ENCODE measurements at regions of chr21 and their contacts with region 1.

Region 1: DNA sequence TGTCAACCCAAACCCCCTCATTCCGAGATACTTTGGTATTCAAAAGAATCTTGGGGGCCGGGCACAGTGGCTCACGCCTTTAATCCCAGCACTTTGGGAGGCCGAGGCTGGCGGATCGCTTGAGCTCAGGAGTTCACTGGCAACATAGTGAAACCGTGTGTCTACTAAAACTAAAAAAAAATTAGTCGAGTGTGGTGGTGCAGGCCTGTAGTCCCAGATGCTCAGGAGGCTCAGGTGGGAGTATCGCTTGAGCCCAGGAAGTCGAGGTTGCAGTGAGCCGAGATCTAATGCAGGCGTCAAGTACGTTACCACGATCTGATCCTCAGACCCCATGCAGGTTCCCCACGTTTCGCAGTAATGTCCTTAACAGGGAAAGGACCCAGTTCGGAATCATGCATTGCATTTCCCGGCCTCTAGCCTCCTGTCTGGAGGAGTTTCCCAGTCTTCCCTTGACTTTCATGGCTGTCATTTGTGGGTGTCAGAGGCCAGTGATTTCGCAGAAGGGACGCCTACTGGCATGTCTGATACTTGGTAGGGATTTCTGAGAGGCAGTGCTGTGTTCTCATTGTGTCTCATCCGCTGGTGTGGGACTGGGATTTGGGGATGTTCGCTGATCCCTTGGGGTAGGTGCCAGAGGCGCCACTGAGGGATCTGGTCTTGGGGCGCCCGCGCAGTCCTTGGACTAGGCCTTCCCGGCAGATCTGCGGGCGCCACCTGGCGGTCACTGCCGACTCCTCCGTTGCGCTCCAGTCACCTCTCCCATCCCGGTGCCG is 39.3 kb upstream of the HMGN1 start:
- DNase-seq: peak; percentile 89 to 97 (median 93)
- ATAC-seq: peak; percentile 74 to 89 (median 83)
- H3K4me3 ChIP-seq: peak overlapping the region in 11 of 12 donors; percentile 16 to 63 (median 53)
- H3K27ac ChIP-seq: peak overlapping the region in 8 of 12 donors; percentile 38 to 80 (median 69)
- H3K4me1 ChIP-seq: peaks cover 0 to 39% (median 19%) of the 10 kb centered on the region in 12 donors
- H3K27me3 ChIP-seq: no peaks in the 10 kb centered on the region
- CTCF ChIP-seq: peak; percentile 85 to 97 (median 94)
- POLR2A ChIP-seq: no peak

Region 2: GRCh38 chr21:39183237-39184007 is 204.8 kb before region 1 on chr21 and contains the start of gene PSMG1:
- intact Hi-C with region 1: loop called in 5 of 10 experiments (anchors 5 to 10 kb)
- DNase-seq: peak; percentile 94 to 97 (median 95)
- ATAC-seq: peak; percentile 97 to 98 (median 98)
- H3K4me3 ChIP-seq: peak within 1 kb of the TSS; percentile 72 to 97 (median 86)
- H3K27ac ChIP-seq: peak within 1 kb of the TSS; percentile 82 to 96 (median 92)
- H3K4me1 ChIP-seq: peaks cover 0 to 24% (median 14%) of the 10 kb centered on the region in 12 donors
- H3K27me3 ChIP-seq: no peaks in the 10 kb centered on the region
- CTCF ChIP-seq: peak in 1 of 12 donors; percentile 14
- POLR2A ChIP-seq: peak in 1 of 2 donors; percentile 72
- total RNA-seq, gene PSMG1: 12.0 to 31.6 (median 25.3) TPM

Region 3: GRCh38 chr21:39313571-39314142 is 74.6 kb before region 1 on chr21 and contains the start of gene BRWD1:
- intact Hi-C with region 1: loop called in 9 of 10 experiments (anchors 2 to 5 kb)
- DNase-seq: peak; percentile 88 to 92 (median 89)
- ATAC-seq: peak; percentile 53 to 86 (median 76)
- H3K4me3 ChIP-seq: peak within 1 kb of the TSS; percentile 68 to 96 (median 82)
- H3K27ac ChIP-seq: peak within 1 kb of the TSS; percentile 92 to 100 (median 98)
- H3K4me1 ChIP-seq: peaks cover 3 to 42% (median 16%) of the 10 kb centered on the region in 12 donors
- H3K27me3 ChIP-seq: no peaks in the 10 kb centered on the region
- CTCF ChIP-seq: peak; percentile 25 to 70 (median 47)
- POLR2A ChIP-seq: peak in 1 of 2 donors; percentile 51
- total RNA-seq, gene BRWD1: 29.0 to 44.5 (median 33.1) TPM

Region 4: GRCh38 chr21:39319181-39319756 is 69.0 kb before region 1 on chr21:
- intact Hi-C with region 1: loop called in 5 of 10 experiments (anchors 2 to 5 kb)
- DNase-seq: peak in 4 of 5 donors; percentile 26 to 73 (median 50)
- ATAC-seq: peak; percentile 64 to 74 (median 70)
- H3K4me3 ChIP-seq: no peak overlapping the region
- H3K27ac ChIP-seq: peak overlapping the region; percentile 63 to 91 (median 78)
- H3K4me1 ChIP-seq: peaks cover 0 to 31% (median 18%) of the 10 kb centered on the region in 12 donors
- H3K27me3 ChIP-seq: no peaks in the 10 kb centered on the region
- CTCF ChIP-seq: no peak
- POLR2A ChIP-seq: no peak

Region 5: GRCh38 chr21:39349211-39350093 is 38.8 kb before region 1 on chr21:
- intact Hi-C with region 1: loop called in 9 of 10 experiments (anchors 1 to 5 kb)
- DNase-seq: peak; percentile 96 to 97 (median 97)
- ATAC-seq: peak; percentile 95 to 97 (median 97)
- H3K4me3 ChIP-seq: peak overlapping the region; percentile 62 to 93 (median 80)
- H3K27ac ChIP-seq: peak overlapping the region; percentile 86 to 97 (median 93)
- H3K4me1 ChIP-seq: peaks cover 0 to 39% (median 24%) of the 10 kb centered on the region in 12 donors
- H3K27me3 ChIP-seq: no peaks in the 10 kb centered on the region
- CTCF ChIP-seq: no peak
- POLR2A ChIP-seq: peak in 1 of 2 donors; percentile 33

Region 6: DNA sequence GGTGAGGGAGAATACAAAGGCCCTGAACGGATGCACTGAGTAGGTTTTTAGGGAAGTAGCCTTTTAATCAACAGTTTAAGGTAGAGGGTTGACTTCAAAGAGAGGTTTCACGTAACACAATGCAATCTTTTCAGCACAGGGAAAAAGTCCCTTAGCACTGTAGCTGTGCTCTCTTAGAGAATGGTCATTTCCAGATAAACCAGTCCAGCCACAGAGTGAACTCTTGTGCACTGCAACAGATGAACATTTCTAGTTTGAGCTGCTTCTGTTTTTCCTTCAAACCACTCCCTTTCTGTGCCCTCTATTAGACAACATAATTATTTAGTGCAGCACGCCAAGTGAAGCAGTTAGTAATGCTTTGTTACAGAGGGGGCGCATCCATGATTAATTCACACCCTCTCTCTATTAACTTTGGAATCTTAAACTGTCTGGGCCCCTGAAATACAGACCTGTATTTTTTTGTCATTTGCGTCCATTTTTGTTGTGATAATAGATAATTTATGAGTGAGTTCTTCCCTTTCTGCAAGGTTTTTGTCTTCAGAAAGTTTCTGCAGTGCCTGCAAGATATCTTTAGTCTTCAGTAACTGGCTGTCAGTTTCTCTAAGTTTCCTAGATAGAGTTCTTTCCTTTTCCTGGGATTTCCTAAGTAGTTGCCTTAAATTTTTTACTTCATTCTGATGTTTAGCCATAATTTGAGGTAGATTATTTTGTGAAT is 34.5 kb after region 1 on chr21:
- intact Hi-C with region 1: no loop called
- DNase-seq: no peak
- ATAC-seq: no peak
- H3K4me3 ChIP-seq: no peak overlapping the region
- H3K27ac ChIP-seq: no peak overlapping the region
- H3K4me1 ChIP-seq: no peaks in the 10 kb centered on the region
- H3K27me3 ChIP-seq: no peaks in the 10 kb centered on the region
- CTCF ChIP-seq: no peak
- POLR2A ChIP-seq: no peak

Region 7: DNA sequence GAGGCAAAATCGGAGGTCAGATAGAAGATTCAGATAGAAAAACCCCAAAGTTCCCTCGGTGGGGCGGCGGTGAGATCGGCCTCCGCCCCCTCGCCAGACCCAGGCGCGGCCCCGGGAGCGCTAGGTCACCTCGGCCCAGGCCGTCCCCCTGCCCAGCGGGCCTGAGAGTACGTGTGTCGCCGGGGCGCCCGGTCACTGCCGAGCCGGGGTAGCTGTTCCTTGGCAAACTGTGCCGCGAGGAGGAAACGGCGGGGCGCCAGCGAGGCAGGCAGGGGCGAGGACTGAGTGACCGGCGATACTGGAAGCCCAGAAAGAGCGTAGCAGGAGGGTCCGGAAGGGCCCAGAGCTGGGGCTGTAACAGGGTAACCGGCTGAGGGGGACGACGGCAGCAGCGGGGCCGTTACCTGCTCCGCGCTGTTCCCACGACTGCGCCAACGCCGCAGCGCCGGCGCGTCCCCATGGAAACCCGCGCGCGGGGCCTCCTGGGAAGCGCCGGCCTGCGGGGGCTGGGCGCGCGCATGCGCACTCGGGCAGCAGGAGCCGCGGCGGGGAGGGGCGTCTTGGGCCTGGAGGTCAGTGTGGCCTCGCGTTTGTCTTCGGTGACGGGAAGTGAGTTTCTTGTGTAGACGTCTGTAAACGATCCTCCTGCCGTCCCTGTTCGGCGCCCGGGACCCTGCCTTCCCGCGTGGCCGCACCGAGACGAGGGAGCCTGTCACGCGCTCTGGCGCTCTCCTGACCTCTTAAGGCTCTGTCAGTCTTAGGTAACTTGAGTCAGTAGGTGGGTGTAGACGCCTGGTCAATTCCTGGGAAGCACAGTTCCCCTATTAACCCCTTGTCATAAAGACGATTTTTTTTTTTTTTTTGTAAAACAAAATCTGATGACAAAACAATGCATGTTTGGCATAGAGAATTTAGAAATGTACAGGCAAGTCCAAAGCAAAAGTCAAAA is 57.4 kb after region 1 on chr21 and contains the start of gene LCA5L:
- intact Hi-C with region 1: loop called in 2 of 10 experiments (anchors 5 to 10 kb)
- DNase-seq: peak; percentile 92 to 97 (median 94)
- ATAC-seq: peak; percentile 82 to 93 (median 92)
- H3K4me3 ChIP-seq: peak within 1 kb of the TSS; percentile 50 to 95 (median 85)
- H3K27ac ChIP-seq: peak within 1 kb of the TSS; percentile 69 to 99 (median 93)
- H3K4me1 ChIP-seq: peaks cover 0 to 26% (median 12%) of the 10 kb centered on the region in 12 donors
- H3K27me3 ChIP-seq: no peaks in the 10 kb centered on the region
- CTCF ChIP-seq: peak in 4 of 12 donors; percentile 9 to 28 (median 18)
- POLR2A ChIP-seq: peak; percentile 38 to 87
- total RNA-seq, gene LCA5L: 0.67 to 1.5 (median 1.0) TPM in 7 of 9 donors, not detected in the others

Measured in heart left ventricle (tissue), 16 donors.